Left lung (tissue), 14 donors: ENCODE measurements at regions of chr1 and their contacts with region 1.

Region 1: GRCh38 chr1:226424228-226425003 is 16.5 kb upstream of the PARP1 start:
- DNase-seq: peak in 2 of 4 donors; percentile 41 to 57
- ATAC-seq: peak; percentile 88
- H3K4me3 ChIP-seq: no peak overlapping the region
- H3K27ac ChIP-seq: no peak overlapping the region
- H3K4me1 ChIP-seq: peaks cover 0 to 3% of the 10 kb centered on the region in 2 donors
- H3K27me3 ChIP-seq: no peaks in the 10 kb centered on the region
- CTCF ChIP-seq: peak in 1 of 2 donors; percentile 42

Region 2: DNA sequence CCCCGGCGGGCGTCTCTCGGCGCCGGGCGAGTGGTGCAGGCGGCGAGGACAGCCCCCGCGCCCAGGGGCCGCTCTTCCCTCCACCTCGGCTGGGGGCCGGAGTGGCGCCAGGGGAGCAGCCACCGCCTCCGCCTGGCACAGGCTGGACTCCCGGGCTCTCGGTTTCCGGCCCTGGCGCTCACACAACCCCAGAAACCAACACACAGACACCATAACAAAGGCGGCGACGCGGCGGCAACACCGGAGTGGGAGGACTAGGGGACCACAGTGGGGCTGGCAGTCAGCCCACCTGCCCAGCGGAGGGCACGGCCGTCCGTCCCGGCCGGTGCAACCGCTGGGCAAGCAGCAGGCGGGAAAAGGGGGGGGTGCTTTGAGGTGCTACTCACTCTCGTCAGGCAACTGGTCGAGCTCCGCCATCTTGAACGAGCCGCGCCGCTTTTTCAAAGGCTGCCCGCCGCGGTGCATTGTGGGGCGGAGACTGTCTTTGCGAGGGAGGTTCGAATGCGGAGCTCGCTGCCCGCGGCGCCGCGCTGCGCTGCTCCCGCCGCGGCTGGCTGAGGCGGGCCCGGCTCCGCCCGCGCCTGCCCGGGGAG is 115.6 kb before region 1 on chr1 and contains the start of gene LIN9:
- intact Hi-C with region 1: no loop called
- DNase-seq: peak; percentile 88 to 98 (median 92)
- ATAC-seq: peak; percentile 96
- H3K4me3 ChIP-seq: peak within 1 kb of the TSS; percentile 79 to 93
- H3K27ac ChIP-seq: peak within 1 kb of the TSS; percentile 57 to 71
- H3K4me1 ChIP-seq: peaks cover 0 to 23% of the 10 kb centered on the region in 2 donors
- H3K27me3 ChIP-seq: peaks cover 0 to 3% of the 10 kb centered on the region in 2 donors
- CTCF ChIP-seq: no peak
- polyA plus RNA-seq, gene LIN9: 9.6 to 14.7 (median 12.9) TPM

Region 3: GRCh38 chr1:226608699-226609505 is 184.5 kb after region 1 on chr1:
- intact Hi-C with region 1: loop called in 1 of 2 experiments (anchors 10 kb)
- DNase-seq: peak in 3 of 4 donors; percentile 46 to 78 (median 56)
- ATAC-seq: peak; percentile 86
- H3K4me3 ChIP-seq: no peak overlapping the region
- H3K27ac ChIP-seq: no peak overlapping the region
- H3K4me1 ChIP-seq: peaks cover 0 to under 1% of the 10 kb centered on the region in 2 donors
- H3K27me3 ChIP-seq: no peaks in the 10 kb centered on the region
- CTCF ChIP-seq: peak; percentile 73 to 75